GM12878 (cell line): ENCODE measurements at regions of chr1 and their contacts with region 1.

Region 1: GRCh38 chr1:22025368-22026155 is 24.1 kb downstream of the CELA3A start:
- DNase-seq: peak; percentile 89
- ATAC-seq: peak; percentile 84
- H3K4me3 ChIP-seq: peak overlapping the region; percentile 88
- H3K27ac ChIP-seq: peak overlapping the region; percentile 97
- H3K4me1 ChIP-seq: peaks cover 7% of the 10 kb centered on the region
- H3K27me3 ChIP-seq: no peaks in the 10 kb centered on the region
- CTCF ChIP-seq: no peak
- EP300 ChIP-seq: no peak; a peak in 1 of 4 replicates
- POLR2A ChIP-seq: peak; percentile 95
- RAD21 ChIP-seq: no peak

Region 2: GRCh38 chr1:21764615-21765423 is 260.7 kb before region 1 on chr1:
- CTCF ChIA-PET with region 1: interaction called, 3 read pairs
- POLR2A ChIA-PET with region 1: interaction called, 4 read pairs
- RAD21 ChIA-PET with region 1: interaction called, 10 read pairs
- SMC1A ChIA-PET with region 1: interaction called, 7 read pairs
- in situ Hi-C with region 1: no loop called
- intact Hi-C with region 1: loop called (anchors 5 kb)
- DNase-seq: no peak
- ATAC-seq: peak; percentile 40
- H3K4me3 ChIP-seq: peak overlapping the region; percentile 23; the same call in 1 of the 2 replicates
- H3K27ac ChIP-seq: peak overlapping the region; percentile 99
- H3K4me1 ChIP-seq: peaks cover 76% of the 10 kb centered on the region
- H3K27me3 ChIP-seq: no peaks in the 10 kb centered on the region
- CTCF ChIP-seq: no peak
- EP300 ChIP-seq: no peak
- POLR2A ChIP-seq: no peak
- RAD21 ChIP-seq: no peak

Region 3: GRCh38 chr1:21871974-21872373 is 153.6 kb before region 1 on chr1:
- CTCF ChIA-PET with region 1: no interaction called
- POLR2A ChIA-PET with region 1: no interaction called
- RAD21 ChIA-PET with region 1: no interaction called
- SMC1A ChIA-PET with region 1: no interaction called
- in situ Hi-C with region 1: no loop called
- intact Hi-C with region 1: no loop called
- DNase-seq: no peak
- ATAC-seq: peak; percentile 30; the same call in 2 of the 3 replicates
- H3K4me3 ChIP-seq: no peak overlapping the region
- H3K27ac ChIP-seq: no peak overlapping the region
- H3K4me1 ChIP-seq: peaks cover 9% of the 10 kb centered on the region
- H3K27me3 ChIP-seq: no peaks in the 10 kb centered on the region; a peak in 1 of 4 replicates
- CTCF ChIP-seq: no peak
- EP300 ChIP-seq: no peak
- POLR2A ChIP-seq: no peak
- RAD21 ChIP-seq: no peak

Region 4: DNA sequence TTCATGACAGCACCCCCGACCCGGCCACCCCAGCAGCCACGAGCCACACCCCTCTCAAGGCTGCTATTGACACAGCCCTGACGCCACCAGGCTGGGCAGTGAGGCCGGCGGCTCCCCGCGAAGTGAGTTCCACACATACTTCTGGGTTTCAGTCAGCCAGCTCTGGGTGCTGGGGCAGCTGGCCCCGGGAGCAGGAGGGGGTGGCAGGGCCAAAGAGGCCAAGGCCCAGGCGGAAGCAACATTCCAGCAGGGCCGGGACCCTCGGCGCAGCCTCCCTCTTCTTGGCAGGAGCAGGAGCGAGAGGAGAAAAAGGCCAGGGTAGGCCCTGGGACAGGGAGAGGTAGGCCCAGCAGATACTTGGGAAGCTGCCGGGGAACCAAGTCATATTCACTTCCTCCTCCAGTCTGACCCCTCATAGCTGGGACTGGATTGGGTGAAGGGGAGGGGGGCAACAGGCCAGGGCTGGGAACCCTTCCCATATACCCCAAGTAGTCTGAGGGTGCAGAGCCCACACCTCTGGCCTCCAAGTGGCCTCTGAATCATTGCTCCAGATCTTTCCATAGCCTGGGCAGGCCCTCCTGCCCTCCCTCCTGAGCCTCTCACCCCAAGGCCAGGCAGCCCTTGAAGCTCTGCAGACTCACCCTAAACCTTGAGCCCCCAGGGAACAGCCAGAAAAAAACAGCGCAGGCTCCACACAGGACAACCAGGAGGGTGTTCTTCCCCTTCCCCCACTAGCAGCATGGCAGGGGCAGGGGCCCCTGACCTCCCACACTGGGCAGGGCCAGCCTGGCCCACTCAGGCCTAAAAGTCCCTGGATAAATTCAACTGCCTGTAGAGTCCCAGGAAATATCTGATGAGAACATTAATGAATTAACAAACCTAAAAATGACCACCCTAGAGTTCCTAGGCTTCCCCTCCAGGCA is 94.1 kb before region 1 on chr1:
- CTCF ChIA-PET with region 1: no interaction called
- POLR2A ChIA-PET with region 1: no interaction called
- RAD21 ChIA-PET with region 1: no interaction called
- SMC1A ChIA-PET with region 1: no interaction called
- in situ Hi-C with region 1: no loop called
- intact Hi-C with region 1: no loop called
- DNase-seq: no peak
- ATAC-seq: no peak
- H3K4me3 ChIP-seq: no peak overlapping the region
- H3K27ac ChIP-seq: no peak overlapping the region
- H3K4me1 ChIP-seq: no peaks in the 10 kb centered on the region; the same call in 1 of the 2 replicates
- H3K27me3 ChIP-seq: peaks cover 0 to 4% of the 10 kb centered on the region in 2 experiments; a peak in 2 of 4 replicates
- CTCF ChIP-seq: no peak
- EP300 ChIP-seq: no peak
- POLR2A ChIP-seq: no peak
- RAD21 ChIP-seq: no peak

Region 5: DNA sequence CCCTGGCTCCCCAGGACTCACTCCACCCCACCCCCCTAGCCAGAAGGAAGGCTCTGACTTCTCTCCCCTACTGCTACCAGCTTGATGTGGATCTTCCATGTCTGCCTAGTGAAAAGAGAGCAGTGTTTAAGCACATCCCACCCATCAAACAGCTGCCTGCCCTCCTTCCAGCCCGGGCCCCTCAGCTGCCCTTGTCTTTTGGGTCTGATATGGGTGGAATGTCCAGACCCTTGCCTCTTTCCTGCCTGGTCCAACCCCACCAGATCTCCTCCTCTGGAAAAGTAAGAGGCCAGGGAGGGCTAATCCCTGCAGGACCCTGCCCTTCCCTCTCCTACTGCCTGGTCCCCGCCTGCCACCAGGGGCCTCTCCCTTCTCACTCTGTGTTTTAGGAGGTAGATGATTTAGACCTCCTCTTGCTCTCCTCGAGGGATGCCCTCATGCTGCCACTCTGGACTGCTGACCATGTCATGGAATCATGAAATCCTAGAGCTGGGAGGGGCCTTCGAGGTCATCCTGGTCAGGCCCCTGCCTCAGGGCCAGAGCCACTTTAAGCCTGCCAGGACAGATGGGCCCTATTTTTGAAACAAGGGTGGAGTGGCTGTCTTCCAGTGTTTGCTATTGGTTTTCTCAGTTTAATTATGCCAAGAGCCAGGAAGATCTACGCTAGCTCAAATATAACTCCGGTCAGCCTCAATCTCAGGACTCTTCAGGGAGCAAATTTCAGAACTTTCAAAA is 72.6 kb before region 1 on chr1:
- CTCF ChIA-PET with region 1: no interaction called
- POLR2A ChIA-PET with region 1: no interaction called
- RAD21 ChIA-PET with region 1: no interaction called
- SMC1A ChIA-PET with region 1: no interaction called
- in situ Hi-C with region 1: no loop called
- intact Hi-C with region 1: no loop called
- DNase-seq: no peak
- ATAC-seq: no peak
- H3K4me3 ChIP-seq: no peak overlapping the region
- H3K27ac ChIP-seq: no peak overlapping the region
- H3K4me1 ChIP-seq: peaks cover 17% of the 10 kb centered on the region
- H3K27me3 ChIP-seq: no peaks in the 10 kb centered on the region; a peak in 1 of 4 replicates
- CTCF ChIP-seq: no peak
- EP300 ChIP-seq: no peak
- POLR2A ChIP-seq: no peak
- RAD21 ChIP-seq: no peak

Region 6: DNA sequence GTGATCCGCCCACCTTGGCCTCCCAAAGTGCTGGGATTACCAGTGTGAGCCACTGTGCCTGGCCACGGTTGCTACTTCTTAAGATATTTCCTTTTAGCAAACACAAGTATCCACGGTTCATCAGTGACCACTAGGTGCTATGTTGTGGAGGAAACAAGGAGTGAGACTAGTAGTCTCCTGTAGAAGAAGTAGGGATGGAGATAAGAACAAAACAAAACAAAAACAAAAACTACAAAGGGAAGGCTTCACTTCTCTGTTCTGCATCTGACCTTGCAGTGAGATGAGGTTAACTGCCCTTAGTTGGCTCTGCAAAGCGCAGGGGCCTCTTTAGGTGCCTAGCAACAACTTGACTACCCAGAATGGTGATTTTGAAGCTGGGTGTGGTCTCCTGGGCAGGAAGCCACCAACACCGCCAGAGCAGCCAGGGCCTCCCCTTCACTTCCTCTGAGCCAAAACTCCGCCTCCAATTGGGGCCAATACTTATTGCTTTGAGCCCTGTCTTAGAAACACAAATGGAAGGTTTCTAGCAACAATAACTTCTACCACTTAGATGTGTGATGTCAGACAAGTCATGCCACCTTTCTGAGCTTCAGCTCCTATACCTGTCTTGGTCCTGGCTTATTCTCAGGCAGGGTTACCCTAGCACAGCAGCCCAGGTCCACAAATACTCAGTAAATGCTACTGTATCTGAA is 14.2 kb after region 1 on chr1:
- CTCF ChIA-PET with region 1: interaction called, 35 read pairs
- POLR2A ChIA-PET with region 1: interaction called, 325 read pairs
- RAD21 ChIA-PET with region 1: interaction called, 11 read pairs
- SMC1A ChIA-PET with region 1: interaction called, 78 read pairs
- in situ Hi-C with region 1: no loop called
- intact Hi-C with region 1: loop called (anchors 2 kb)
- DNase-seq: peak; percentile 97
- ATAC-seq: peak; percentile 100
- H3K4me3 ChIP-seq: peak overlapping the region; percentile 33; the same call in 1 of the 2 replicates
- H3K27ac ChIP-seq: peak overlapping the region; percentile 94
- H3K4me1 ChIP-seq: peaks cover 25% of the 10 kb centered on the region
- H3K27me3 ChIP-seq: no peaks in the 10 kb centered on the region
- CTCF ChIP-seq: 0 out of 6 replicates have a peak, but pooled peaks of 2 of the 3 experiments have one; percentile 0 to 24
- EP300 ChIP-seq: no peak
- POLR2A ChIP-seq: peak; percentile 60
- RAD21 ChIP-seq: 0 out of 2 replicates have a peak, but pooled peaks have one; percentile 8

Region 7: GRCh38 chr1:22064751-22065402 is 39.3 kb after region 1 on chr1:
- CTCF ChIA-PET with region 1: interaction called, 107 read pairs
- POLR2A ChIA-PET with region 1: interaction called, 3 read pairs
- RAD21 ChIA-PET with region 1: interaction called, 6 read pairs
- SMC1A ChIA-PET with region 1: interaction called, 10 read pairs
- in situ Hi-C with region 1: no loop called
- intact Hi-C with region 1: loop called (anchors 5 kb)
- DNase-seq: no peak
- ATAC-seq: no peak
- H3K4me3 ChIP-seq: no peak overlapping the region
- H3K27ac ChIP-seq: no peak overlapping the region
- H3K4me1 ChIP-seq: peaks cover 13% of the 10 kb centered on the region; the same call in 1 of the 2 replicates
- H3K27me3 ChIP-seq: no peaks in the 10 kb centered on the region
- CTCF ChIP-seq: no peak
- EP300 ChIP-seq: no peak
- POLR2A ChIP-seq: no peak
- RAD21 ChIP-seq: no peak

Region 8: DNA sequence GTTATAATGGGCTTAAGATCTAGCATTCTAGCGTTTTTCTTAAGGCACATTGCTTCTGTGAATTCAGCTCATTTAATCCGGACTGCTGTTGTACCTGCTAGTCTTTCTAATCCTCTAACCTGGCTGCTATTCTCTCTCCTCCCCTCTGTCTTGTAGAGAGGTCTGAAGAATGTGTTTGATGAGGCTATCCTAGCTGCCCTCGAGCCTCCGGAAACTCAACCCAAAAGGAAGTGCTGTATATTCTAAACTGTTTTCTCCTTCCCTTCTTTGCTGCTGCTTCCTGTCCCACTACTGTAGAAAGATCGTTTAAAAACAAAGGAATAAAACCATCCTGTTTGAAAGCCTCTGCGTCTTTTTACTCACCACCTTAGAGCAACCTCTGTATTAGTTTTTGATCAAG is 64.2 kb after region 1 on chr1:
- CTCF ChIA-PET with region 1: interaction called, 4 read pairs
- POLR2A ChIA-PET with region 1: interaction called, 3 read pairs
- RAD21 ChIA-PET with region 1: interaction called, 3 read pairs
- SMC1A ChIA-PET with region 1: interaction called, 4 read pairs
- in situ Hi-C with region 1: no loop called
- intact Hi-C with region 1: loop called (anchors 5 kb)
- DNase-seq: no peak
- ATAC-seq: peak; percentile 21
- H3K4me3 ChIP-seq: no peak overlapping the region; the same call in 1 of the 2 replicates
- H3K27ac ChIP-seq: peak overlapping the region; percentile 29
- H3K4me1 ChIP-seq: peaks cover 27% of the 10 kb centered on the region
- H3K27me3 ChIP-seq: no peaks in the 10 kb centered on the region
- CTCF ChIP-seq: no peak
- EP300 ChIP-seq: no peak
- POLR2A ChIP-seq: no peak
- RAD21 ChIP-seq: no peak

Region 9: GRCh38 chr1:22204941-22205913 is 179.7 kb after region 1 on chr1:
- CTCF ChIA-PET with region 1: no interaction called
- POLR2A ChIA-PET with region 1: no interaction called
- RAD21 ChIA-PET with region 1: no interaction called
- SMC1A ChIA-PET with region 1: no interaction called
- in situ Hi-C with region 1: no loop called
- intact Hi-C with region 1: no loop called
- DNase-seq: no peak
- ATAC-seq: no peak
- H3K4me3 ChIP-seq: no peak overlapping the region
- H3K27ac ChIP-seq: no peak overlapping the region
- H3K4me1 ChIP-seq: no peaks in the 10 kb centered on the region
- H3K27me3 ChIP-seq: peaks cover 1 to 5% of the 10 kb centered on the region in 2 experiments; a peak in 3 of 4 replicates
- CTCF ChIP-seq: no peak
- EP300 ChIP-seq: no peak
- POLR2A ChIP-seq: no peak
- RAD21 ChIP-seq: no peak